Activated T-helper 2 cell treated with anti-CD3 and anti-CD28 coated beads, Interferon-gamma antibody, Interleukin-2, Interleukin-4, amounts not matched to agents 10 μg/mL and 5 μg/mL and 100 μg/mL, durations not matched to agents 14 hours and 24 hours and 36 hours (primary cell): ENCODE measurements at regions of chr7 and their contacts with region 1.

Region 1: DNA sequence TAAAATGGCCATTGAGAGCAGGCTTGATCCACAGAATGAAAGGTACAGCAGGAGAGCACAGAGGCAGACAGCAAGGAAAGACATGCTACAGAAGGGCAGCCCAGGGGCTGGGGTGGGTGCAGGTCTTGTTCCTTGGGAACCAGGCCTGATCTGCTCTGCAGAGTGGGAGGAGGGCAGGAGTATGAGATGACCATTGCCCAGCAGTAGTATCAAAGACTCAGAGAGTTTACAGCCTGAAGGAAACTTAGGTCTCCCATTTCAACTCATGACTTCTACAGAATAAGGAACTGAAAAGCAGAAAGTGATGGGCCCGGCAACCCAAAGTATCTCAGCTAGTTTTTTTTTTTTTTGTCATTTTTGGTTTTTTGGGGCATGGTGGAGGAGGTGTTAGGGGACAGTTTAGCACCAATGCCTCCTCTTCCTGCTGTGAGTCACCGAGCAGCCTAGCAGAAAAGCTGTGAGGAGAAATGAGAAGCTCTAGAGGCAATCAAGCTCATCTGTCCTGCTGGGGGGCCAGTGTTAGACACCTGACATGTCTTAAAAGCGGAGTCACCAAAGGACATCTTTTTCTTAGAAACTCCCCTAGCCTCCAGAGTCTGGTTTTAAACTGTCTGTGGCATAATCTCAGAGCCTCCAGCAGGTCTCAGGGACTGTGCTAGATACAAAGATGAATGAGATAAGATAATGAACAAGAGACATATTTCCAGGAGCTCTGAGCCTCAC is 34.3 kb upstream of the HERPUD2 start:
- DNase-seq: no peak
- H3K4me3 Mint-ChIP-seq: peak overlapping the region; percentile 3
- H3K27ac Mint-ChIP-seq: peak overlapping the region; percentile 47
- H3K4me1 Mint-ChIP-seq: peaks cover 45% of the 10 kb centered on the region
- H3K27me3 Mint-ChIP-seq: peaks cover 15% of the 10 kb centered on the region

Region 2: DNA sequence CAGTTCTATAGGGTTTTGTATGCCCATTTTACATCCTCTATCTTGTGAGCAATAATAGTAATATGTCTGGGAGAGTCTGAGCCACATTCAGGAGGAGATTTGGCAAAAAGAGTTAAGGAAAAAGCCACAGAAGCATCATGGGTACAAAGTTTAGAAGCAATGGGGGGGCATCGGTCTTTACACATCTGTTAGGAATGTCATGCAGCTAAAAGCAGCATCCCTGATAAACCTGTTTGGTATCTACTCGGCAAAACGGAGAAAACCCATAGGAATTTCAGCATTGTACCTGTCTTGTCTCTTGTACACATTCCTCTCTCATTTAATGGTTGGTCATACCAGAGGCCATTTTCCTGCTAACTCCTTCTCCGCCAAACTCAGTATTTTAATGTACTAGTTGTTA is 21.8 kb before region 1 on chr7:
- intact Hi-C with region 1: loop called (anchors 1 kb)
- DNase-seq: no peak
- H3K4me3 Mint-ChIP-seq: no peak overlapping the region
- H3K27ac Mint-ChIP-seq: no peak overlapping the region
- H3K4me1 Mint-ChIP-seq: peaks cover 21% of the 10 kb centered on the region
- H3K27me3 Mint-ChIP-seq: no peaks in the 10 kb centered on the region

Region 3: DNA sequence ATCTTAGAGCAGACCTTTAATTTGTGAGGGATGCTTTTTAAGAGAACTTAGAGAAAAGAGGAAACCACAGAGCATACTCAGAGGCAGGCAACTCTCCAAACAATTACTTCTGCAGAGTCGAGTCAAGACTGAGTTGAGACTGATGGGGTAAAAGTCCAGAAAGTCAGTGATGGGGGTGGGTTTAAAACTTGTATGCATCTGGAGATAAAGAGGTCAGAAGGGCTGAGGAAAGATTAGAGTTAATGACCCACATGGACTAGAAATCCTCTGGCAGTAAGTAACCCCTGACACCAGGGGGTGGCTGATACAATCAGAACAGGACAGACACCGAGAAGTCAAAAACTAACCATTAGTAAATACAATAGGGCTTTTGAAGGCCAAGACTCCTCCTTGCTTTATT is 29.2 kb after region 1 on chr7:
- intact Hi-C with region 1: no loop called
- DNase-seq: no peak
- H3K4me3 Mint-ChIP-seq: no peak overlapping the region
- H3K27ac Mint-ChIP-seq: no peak overlapping the region
- H3K4me1 Mint-ChIP-seq: peaks cover 4% of the 10 kb centered on the region
- H3K27me3 Mint-ChIP-seq: peaks cover 13% of the 10 kb centered on the region

Region 4: DNA sequence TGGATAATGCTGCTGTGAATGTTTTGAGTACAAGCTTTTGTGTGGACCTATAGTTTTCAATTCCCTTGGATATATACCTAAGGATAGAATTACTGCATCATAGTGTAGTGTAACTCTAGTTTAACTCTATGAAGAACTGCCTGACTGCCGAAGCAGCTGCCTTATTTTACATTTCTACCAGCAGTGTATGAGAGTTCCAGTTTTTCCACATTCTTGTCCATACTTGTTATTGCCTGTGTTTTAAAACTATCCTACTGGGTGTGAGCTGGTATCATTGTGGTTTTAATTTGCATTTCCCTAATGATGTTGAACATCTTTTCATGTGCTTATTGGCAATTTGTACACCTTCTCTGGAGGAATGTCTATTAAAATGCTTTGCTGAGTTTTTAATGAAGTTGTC is 87.3 kb after region 1 on chr7:
- intact Hi-C with region 1: loop called (anchors 1 kb)
- DNase-seq: no peak
- H3K4me3 Mint-ChIP-seq: no peak overlapping the region
- H3K27ac Mint-ChIP-seq: no peak overlapping the region
- H3K4me1 Mint-ChIP-seq: peaks cover 59% of the 10 kb centered on the region
- H3K27me3 Mint-ChIP-seq: no peaks in the 10 kb centered on the region